ENCODE measurements at regions of chr17 and their contacts with region 1.

Region 1: GRCh38 chr17:75749545-75750389 is 15.2 kb downstream of the GALK1 start:
- DNase-seq: peak; percentile 76
- H3K4me3 ChIP-seq: no peak overlapping the region
- H3K27ac ChIP-seq: peak overlapping the region; percentile 30 to 58
- H3K4me1 ChIP-seq: no peaks in the 10 kb centered on the region
- H3K27me3 ChIP-seq: no peaks in the 10 kb centered on the region
- CTCF ChIP-seq: peak; percentile 93 to 98 (median 94)
- POLR2A ChIP-seq: no peak

Region 2: GRCh38 chr17:75428543-75429469 is 321.0 kb before region 1 on chr17:
- intact Hi-C with region 1: loop called (anchors 10 kb)
- DNase-seq: no peak
- H3K4me3 ChIP-seq: no peak overlapping the region
- H3K27ac ChIP-seq: peak overlapping the region; percentile 29 to 56
- H3K4me1 ChIP-seq: no peaks in the 10 kb centered on the region
- H3K27me3 ChIP-seq: no peaks in the 10 kb centered on the region
- CTCF ChIP-seq: no peak
- POLR2A ChIP-seq: no peak

Region 3: DNA sequence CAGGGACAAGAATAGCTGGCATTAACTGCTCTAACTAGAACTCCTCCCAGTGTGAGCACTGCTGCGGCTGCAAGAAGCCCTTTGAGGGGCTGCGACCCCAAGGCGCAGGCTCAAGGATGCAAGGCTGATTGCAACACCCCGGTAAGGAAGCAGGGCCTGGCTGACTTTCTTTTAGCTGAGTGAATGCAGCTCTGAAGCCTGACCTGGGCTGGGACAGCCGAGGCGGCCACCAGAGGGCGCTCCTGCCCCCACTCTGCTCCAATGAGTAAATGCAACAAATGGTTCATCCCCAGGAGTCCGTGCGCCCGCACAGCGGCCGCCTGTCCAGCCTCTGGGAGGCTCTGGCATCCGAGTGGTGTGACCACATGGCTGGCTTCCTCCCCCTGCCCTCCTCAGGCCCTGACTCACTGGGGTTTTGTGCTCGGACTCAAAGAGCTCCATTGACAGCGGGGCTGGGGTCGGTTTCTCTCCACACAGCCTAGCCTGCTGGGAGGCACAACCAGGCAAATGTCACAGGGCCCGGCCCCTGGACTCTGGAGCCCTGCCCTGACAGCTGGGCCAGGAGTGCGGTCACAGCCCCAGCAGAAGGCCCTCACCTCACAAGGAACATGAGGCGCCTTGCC is 116.8 kb before region 1 on chr17 and contains the start of gene SMIM5:
- intact Hi-C with region 1: loop called (anchors 1 kb)
- DNase-seq: peak; percentile 78
- H3K4me3 ChIP-seq: no peak within 1 kb of the TSS
- H3K27ac ChIP-seq: peak within 1 kb of the TSS; percentile 77 to 78
- H3K4me1 ChIP-seq: peaks cover 15% of the 10 kb centered on the region
- H3K27me3 ChIP-seq: no peaks in the 10 kb centered on the region
- CTCF ChIP-seq: peak; percentile 92 to 97 (median 96)
- POLR2A ChIP-seq: no peak
- total RNA-seq, gene SMIM5: 0.27 to 4.1 TPM

Region 4: GRCh38 chr17:75673487-75673886 is 76.3 kb before region 1 on chr17:
- intact Hi-C with region 1: loop called (anchors 2 kb)
- DNase-seq: no peak
- H3K4me3 ChIP-seq: no peak overlapping the region
- H3K27ac ChIP-seq: no peak overlapping the region
- H3K4me1 ChIP-seq: no peaks in the 10 kb centered on the region
- H3K27me3 ChIP-seq: no peaks in the 10 kb centered on the region
- CTCF ChIP-seq: no peak
- POLR2A ChIP-seq: no peak

Region 5: DNA sequence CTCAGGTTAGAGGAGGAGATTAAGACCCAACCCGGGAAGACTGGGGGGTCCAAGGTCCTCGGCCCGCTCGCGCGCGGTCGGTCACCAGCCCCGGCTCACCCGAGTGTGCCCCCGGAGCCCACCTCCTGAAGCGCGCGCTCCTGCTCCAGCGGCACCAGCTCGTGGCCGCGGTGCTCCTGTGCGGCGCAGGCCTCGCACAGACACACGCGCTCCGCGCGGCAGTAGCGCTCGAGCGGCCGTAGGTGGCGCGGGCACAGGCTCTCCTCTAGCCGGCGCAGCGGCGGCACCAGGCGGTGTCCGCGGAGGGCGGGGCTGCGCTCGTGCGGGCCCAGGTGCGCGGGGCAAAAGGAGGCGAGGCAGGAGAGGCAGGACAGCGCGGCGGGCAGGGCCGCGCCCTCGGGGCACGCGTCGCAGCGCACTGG is 128.0 kb after region 1 on chr17:
- intact Hi-C with region 1: no loop called
- DNase-seq: peak; percentile 58
- H3K4me3 ChIP-seq: peak overlapping the region; percentile 47 to 53
- H3K27ac ChIP-seq: peak overlapping the region; percentile 91
- H3K4me1 ChIP-seq: peaks cover 24% of the 10 kb centered on the region
- H3K27me3 ChIP-seq: no peaks in the 10 kb centered on the region
- CTCF ChIP-seq: peak in 2 of 4 experiments; percentile 61 to 69
- POLR2A ChIP-seq: no peak

Region 6: GRCh38 chr17:75888511-75888910 is 138.7 kb after region 1 on chr17:
- intact Hi-C with region 1: no loop called
- DNase-seq: no peak
- H3K4me3 ChIP-seq: no peak overlapping the region
- H3K27ac ChIP-seq: no peak overlapping the region
- H3K4me1 ChIP-seq: no peaks in the 10 kb centered on the region
- H3K27me3 ChIP-seq: no peaks in the 10 kb centered on the region
- CTCF ChIP-seq: no peak
- POLR2A ChIP-seq: no peak